Activated CD8-positive, alpha-beta T cell treated with anti-CD3 and anti-CD28 coated beads, Interleukin-2, amount 10 ng/mL, durations not matched to agents 7 days and 5 days (primary cell): ENCODE measurements at regions of chr1 and their contacts with region 1.

Region 1: DNA sequence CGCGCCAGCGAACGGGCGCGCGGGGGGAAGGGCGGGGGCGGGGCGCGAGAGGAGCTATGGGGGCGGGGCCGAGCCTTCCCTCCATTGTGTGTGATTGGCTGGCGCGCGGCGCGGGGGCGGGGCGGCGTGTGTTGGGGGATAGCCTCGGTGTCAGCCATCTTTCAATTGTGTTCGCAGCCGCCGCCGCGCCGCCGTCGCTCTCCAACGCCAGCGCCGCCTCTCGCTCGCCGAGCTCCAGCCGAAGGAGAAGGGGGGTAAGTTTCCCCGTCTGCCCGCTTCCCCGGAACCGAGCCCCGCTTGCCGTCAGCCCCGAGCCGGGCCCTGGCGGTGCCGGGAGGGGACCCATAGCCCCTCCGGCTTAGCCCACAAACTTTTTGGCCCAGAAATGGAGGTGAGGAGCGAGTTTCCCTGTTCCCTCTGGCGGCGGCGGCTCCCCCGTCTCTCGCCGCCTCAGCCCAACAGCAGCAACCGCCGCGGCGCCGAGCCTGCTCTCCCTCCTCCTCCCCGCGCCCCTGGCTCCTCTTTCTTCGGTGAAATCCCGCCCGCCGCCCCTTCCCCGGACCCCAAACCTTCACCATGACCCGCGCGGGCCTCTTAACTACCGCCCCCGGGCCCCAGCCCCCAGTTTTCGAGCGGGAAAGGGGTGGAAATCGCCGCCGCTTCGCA is at the start of gene H3-3A:
- DNase-seq: peak; percentile 98
- ATAC-seq: peak; percentile 87
- H3K4me3 Mint-ChIP-seq: peak within 1 kb of the TSS; percentile 100
- H3K27ac Mint-ChIP-seq: peak within 1 kb of the TSS; percentile 100
- H3K4me1 Mint-ChIP-seq: peaks cover 37% of the 10 kb centered on the region
- H3K27me3 Mint-ChIP-seq: no peaks in the 10 kb centered on the region
- total RNA-seq, gene H3-3A: 526 to 541 TPM

Region 2: DNA sequence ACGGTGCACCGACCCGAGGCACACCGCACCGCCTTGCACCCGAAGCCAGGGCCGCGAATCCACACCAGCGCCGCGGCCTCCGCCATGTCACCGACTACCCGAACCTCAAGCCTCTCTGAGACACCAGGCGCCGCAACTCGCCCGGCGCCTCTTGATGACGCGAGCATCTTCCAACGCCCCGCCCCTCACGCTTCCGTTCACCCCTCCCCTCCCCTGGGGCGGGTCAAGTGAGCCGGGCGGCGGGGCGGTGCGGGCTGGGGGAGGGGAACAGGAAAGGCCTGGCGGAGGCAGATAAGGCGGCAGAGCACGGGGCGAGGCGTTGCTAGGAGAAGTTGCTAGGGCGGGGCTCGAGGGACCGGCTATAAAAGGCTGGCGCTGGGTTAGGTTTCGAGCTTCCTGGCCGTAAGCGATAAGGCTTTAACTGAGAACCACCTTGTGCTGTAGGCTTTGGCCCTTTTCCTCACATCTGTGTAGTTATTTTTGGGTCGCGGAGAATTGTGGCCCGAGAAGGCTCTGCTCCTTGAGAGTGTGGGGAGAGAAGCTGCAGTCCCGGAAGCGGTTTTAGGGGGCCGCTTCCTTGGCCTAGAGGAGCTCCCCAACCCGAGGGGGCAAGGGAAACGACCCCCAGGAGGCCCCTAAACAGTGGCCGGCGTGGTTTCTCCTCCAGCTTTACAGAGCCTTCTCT is 63.3 kb before region 1 on chr1 and contains the start of gene SDE2:
- CTCF ChIA-PET with region 1: interaction called, 61 read pairs
- POLR2A ChIA-PET with region 1: interaction called, 113 read pairs
- DNase-seq: peak; percentile 100
- ATAC-seq: peak; percentile 77
- H3K4me3 Mint-ChIP-seq: peak within 1 kb of the TSS; percentile 100
- H3K27ac Mint-ChIP-seq: peak within 1 kb of the TSS; percentile 100
- H3K4me1 Mint-ChIP-seq: peaks cover 78% of the 10 kb centered on the region
- H3K27me3 Mint-ChIP-seq: no peaks in the 10 kb centered on the region
- total RNA-seq, gene SDE2: 15.4 to 16.9 TPM

Region 3: GRCh38 chr1:226051356-226051755 is 11.3 kb before region 1 on chr1:
- CTCF ChIA-PET with region 1: interaction called, 12 read pairs
- POLR2A ChIA-PET with region 1: interaction called, 11 read pairs
- DNase-seq: no peak
- ATAC-seq: no peak
- H3K4me3 Mint-ChIP-seq: no peak overlapping the region
- H3K27ac Mint-ChIP-seq: no peak overlapping the region
- H3K4me1 Mint-ChIP-seq: no peaks in the 10 kb centered on the region
- H3K27me3 Mint-ChIP-seq: peaks cover 2% of the 10 kb centered on the region

Region 4: DNA sequence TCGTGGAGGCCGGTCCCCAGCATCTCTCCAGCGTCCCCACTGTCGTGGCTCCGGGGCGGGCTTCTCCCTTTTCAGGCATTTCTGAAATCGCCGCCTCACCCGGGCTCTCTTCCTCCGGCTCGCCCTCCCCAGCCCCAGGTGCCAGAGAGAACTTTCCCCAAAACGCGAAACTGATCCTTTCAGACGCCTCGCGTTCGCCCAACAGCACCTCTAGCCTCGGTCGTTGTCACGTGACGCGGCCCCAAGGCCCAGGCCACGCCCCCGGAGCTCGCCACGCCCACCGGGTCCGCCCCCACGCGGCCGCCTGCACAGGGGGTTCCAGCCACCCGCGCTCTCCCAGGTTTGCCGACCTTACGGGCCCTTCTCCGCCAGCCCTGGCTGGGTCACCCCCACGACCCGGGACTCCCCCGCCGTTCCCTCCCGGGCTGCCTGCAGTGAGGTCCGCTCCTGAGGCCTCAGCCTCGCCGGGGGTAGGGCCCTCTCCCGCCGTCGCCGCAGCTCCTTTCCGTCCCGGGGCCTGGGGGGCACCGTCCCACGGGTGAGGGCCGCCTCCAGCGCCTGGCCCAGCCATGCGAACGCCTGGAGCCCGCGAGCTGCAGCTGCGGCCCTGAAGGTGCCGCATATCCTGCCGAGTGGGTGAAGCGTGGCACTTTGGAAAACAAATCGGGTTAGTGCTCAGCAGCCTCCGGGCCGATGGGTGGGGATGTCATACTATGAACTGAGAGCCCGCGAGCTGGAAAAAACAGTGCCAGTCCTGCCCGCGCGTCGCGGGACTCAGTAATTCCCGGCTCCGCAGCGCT is 20.8 kb after region 1 on chr1:
- CTCF ChIA-PET with region 1: interaction called, 73 read pairs
- POLR2A ChIA-PET with region 1: interaction called, 10 read pairs
- DNase-seq: peak; percentile 93
- ATAC-seq: peak; percentile 96
- H3K4me3 Mint-ChIP-seq: peak overlapping the region; percentile 84
- H3K27ac Mint-ChIP-seq: peak overlapping the region; percentile 79
- H3K4me1 Mint-ChIP-seq: peaks cover 9% of the 10 kb centered on the region
- H3K27me3 Mint-ChIP-seq: peaks cover 7% of the 10 kb centered on the region

Region 5: GRCh38 chr1:226109829-226110248 is 47.1 kb after region 1 on chr1:
- CTCF ChIA-PET with region 1: interaction called, 42 read pairs
- POLR2A ChIA-PET with region 1: interaction called, 21 read pairs
- DNase-seq: peak; percentile 85
- ATAC-seq: peak; percentile 87
- H3K4me3 Mint-ChIP-seq: peak overlapping the region; percentile 85
- H3K27ac Mint-ChIP-seq: peak overlapping the region; percentile 85
- H3K4me1 Mint-ChIP-seq: peaks cover 21% of the 10 kb centered on the region
- H3K27me3 Mint-ChIP-seq: peaks cover 3% of the 10 kb centered on the region

Region 6: GRCh38 chr1:226487921-226488546 is 425.3 kb after region 1 on chr1:
- CTCF ChIA-PET with region 1: no interaction called
- POLR2A ChIA-PET with region 1: no interaction called
- DNase-seq: no peak
- ATAC-seq: no peak
- H3K4me3 Mint-ChIP-seq: no peak overlapping the region
- H3K27ac Mint-ChIP-seq: no peak overlapping the region
- H3K4me1 Mint-ChIP-seq: peaks cover 6% of the 10 kb centered on the region
- H3K27me3 Mint-ChIP-seq: peaks cover 26% of the 10 kb centered on the region